Activated CD8-positive, alpha-beta T cell treated with anti-CD3 and anti-CD28 coated beads for 36 hours (primary cell): ENCODE measurements at regions of chr12 and their contacts with region 1.

Region 1: DNA sequence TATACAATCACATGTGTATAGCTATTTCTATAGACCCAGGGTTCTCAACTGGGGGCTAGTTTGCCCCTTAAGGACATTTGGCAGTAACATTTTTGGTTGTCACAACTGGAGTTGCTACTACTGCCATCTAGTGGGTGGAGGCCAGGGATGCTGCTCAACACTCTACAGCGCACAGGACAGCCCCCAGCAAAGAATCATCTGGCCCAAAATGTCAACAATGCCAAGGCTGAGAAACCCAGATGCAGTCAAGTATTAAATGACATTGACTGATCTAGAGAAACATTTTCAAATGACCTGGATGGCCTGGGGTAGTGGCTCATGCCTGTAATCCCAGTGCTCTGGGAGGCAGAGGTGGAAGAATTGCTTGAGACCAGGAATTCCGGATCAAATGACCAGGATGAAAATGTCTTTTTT is 5.8 kb downstream of the WSB2 start:
- DNase-seq: peak; percentile 90
- ATAC-seq: peak; percentile 90
- H3K4me3 Mint-ChIP-seq: no peak overlapping the region
- H3K27ac Mint-ChIP-seq: peak overlapping the region; percentile 50
- H3K4me1 Mint-ChIP-seq: peaks cover 48% of the 10 kb centered on the region
- H3K27me3 Mint-ChIP-seq: no peaks in the 10 kb centered on the region
- CTCF ChIP-seq: peak; percentile 76

Region 2: GRCh38 chr12:118035246-118036041 is 19.7 kb before region 1 on chr12:
- CTCF ChIA-PET with region 1: interaction called, 11 read pairs
- POLR2A ChIA-PET with region 1: interaction called, 11 read pairs
- intact Hi-C with region 1: no loop called
- DNase-seq: peak; percentile 47
- ATAC-seq: peak; percentile 83
- H3K4me3 Mint-ChIP-seq: no peak overlapping the region
- H3K27ac Mint-ChIP-seq: peak overlapping the region; percentile 91
- H3K4me1 Mint-ChIP-seq: peaks cover 49% of the 10 kb centered on the region
- H3K27me3 Mint-ChIP-seq: no peaks in the 10 kb centered on the region
- CTCF ChIP-seq: no peak

Region 3: GRCh38 chr12:118044075-118044474 is 11.1 kb before region 1 on chr12:
- CTCF ChIA-PET with region 1: interaction called, 21 read pairs
- POLR2A ChIA-PET with region 1: interaction called, 11 read pairs
- intact Hi-C with region 1: no loop called
- DNase-seq: no peak
- ATAC-seq: peak; percentile 20
- H3K4me3 Mint-ChIP-seq: no peak overlapping the region
- H3K27ac Mint-ChIP-seq: peak overlapping the region; percentile 82
- H3K4me1 Mint-ChIP-seq: peaks cover 37% of the 10 kb centered on the region
- H3K27me3 Mint-ChIP-seq: no peaks in the 10 kb centered on the region
- CTCF ChIP-seq: no peak

Region 4: DNA sequence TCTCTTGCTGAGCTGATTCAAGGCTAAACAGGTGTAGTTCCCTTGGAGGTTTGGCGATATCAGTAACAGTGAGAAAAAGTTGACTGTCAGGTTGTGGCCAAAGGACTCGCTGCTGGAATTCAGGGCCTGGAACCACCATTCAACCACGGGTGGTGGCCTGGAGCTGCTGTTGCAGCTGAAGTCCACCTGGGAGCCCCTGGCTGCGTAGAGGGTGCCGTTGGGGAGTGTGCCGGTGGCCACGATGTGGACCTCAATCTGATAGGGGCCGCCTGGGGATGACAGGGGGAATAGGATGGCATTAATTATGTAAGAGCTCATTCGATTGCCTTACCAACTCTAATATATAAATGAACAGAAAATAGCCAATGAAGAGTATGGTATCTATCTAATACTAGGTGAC is 27.0 kb after region 1 on chr12:
- CTCF ChIA-PET with region 1: no interaction called
- POLR2A ChIA-PET with region 1: no interaction called
- intact Hi-C with region 1: no loop called
- DNase-seq: no peak
- ATAC-seq: no peak
- H3K4me3 Mint-ChIP-seq: no peak overlapping the region
- H3K27ac Mint-ChIP-seq: no peak overlapping the region
- H3K4me1 Mint-ChIP-seq: no peaks in the 10 kb centered on the region
- H3K27me3 Mint-ChIP-seq: no peaks in the 10 kb centered on the region
- CTCF ChIP-seq: no peak

Region 5: DNA sequence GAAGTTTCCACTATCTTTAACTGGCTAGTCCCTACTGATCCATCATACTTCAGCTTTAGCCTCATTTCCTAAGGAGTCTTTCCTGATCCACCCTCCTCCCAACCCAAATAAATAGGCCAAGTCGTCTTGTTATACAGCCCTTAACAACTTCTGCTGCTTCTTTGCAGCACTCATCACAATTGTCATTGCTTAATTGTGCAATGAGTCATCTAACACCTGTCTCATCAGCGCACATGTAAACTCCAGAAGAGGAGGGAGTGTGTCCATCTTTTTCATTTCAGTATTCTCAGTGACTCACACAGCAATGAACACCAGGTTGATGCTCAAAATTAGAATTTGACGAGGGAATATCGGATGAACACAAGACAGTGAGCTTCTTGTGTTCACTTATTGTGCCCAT is 408.5 kb after region 1 on chr12:
- CTCF ChIA-PET with region 1: no interaction called
- POLR2A ChIA-PET with region 1: no interaction called
- intact Hi-C with region 1: no loop called
- DNase-seq: no peak
- ATAC-seq: no peak
- H3K4me3 Mint-ChIP-seq: no peak overlapping the region
- H3K27ac Mint-ChIP-seq: no peak overlapping the region
- H3K4me1 Mint-ChIP-seq: no peaks in the 10 kb centered on the region
- H3K27me3 Mint-ChIP-seq: no peaks in the 10 kb centered on the region
- CTCF ChIP-seq: no peak